ENCODE measurements at regions of chr6 and their contacts with region 1.

Region 1: DNA sequence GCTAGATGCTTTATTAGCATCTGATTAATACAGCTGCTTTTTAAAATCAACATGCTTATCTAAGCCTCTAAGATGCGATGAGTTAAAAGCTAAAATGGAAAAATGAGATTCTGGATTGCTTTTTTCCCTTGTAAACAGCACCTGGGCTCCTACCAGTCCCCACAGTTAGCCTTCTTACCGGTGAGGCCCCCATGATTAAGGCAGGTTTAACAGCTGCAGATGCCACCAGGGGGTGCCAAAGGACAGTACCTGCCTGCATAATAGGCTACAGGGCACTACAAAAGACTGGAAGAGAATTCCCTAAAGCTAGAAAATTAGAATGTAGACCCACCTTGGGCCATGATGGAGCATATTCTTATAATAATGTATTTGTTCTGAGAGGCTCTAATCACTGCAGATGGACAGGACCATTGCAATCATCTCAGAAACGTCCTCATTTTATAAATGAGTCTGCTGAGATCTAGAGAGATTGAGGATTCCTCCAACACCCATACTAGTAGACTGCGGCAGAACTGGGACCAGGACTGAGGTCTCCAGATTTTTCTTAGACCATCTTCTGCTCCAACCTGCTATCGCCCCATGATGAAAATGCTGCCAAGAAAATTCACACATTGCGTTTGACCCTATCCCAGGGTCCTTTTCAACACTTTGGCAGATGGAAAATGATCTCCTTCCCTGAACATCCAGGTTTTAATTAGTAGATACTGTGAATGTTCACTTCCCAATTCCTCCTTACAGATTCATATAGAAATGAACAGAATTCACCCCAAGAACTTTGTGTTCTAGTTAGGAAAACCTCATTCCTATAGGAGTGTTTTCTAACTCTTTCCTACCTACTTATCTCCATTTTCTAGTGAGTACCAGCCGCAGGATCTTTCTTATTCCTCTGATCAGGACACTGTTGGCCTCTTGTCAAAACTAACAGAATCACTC is 148.8 kb downstream of the RPS12 start:
- DNase-seq: peak; percentile 80
- ATAC-seq: 0 out of 2 replicates have a peak, but pooled peaks have one; percentile 19
- H3K4me3 ChIP-seq: no peak overlapping the region
- H3K27ac ChIP-seq: peak overlapping the region; percentile 79
- H3K4me1 ChIP-seq: peaks cover 72% of the 10 kb centered on the region
- H3K27me3 ChIP-seq: no peaks in the 10 kb centered on the region
- CTCF ChIP-seq: peak; percentile 92

Region 2: DNA sequence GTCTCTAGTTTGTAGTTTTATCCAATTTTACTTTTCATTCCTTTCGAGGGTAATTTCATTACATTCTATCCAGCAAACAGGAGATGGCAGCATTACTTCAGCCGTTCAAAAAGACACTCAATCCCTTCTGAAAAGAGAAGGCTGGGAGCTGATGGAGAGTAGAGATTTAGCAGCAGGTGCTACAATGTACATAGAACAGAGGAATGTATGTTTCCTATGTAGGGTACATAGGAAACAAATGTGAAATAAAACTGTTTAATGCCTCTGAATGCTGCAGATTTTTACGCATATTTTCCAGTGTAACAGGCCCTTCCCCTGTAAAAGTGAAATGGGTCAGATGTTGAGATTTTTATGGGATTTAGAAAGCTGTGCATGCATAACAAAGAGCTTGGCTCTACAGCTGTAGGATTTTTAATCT is 132.9 kb before region 1 on chr6:
- CTCF ChIA-PET with region 1: interaction called, 12 read pairs
- POLR2A ChIA-PET with region 1: interaction called, 6 read pairs
- intact Hi-C with region 1: loop called (anchors 1 kb)
- DNase-seq: peak; percentile 60
- ATAC-seq: peak; percentile 61; the same call in 1 of the 2 replicates
- H3K4me3 ChIP-seq: no peak overlapping the region
- H3K27ac ChIP-seq: no peak overlapping the region
- H3K4me1 ChIP-seq: no peaks in the 10 kb centered on the region
- H3K27me3 ChIP-seq: no peaks in the 10 kb centered on the region
- CTCF ChIP-seq: peak; percentile 73

Region 3: GRCh38 chr6:133040094-133040802 is 77.0 kb after region 1 on chr6:
- CTCF ChIA-PET with region 1: no interaction called
- POLR2A ChIA-PET with region 1: no interaction called
- intact Hi-C with region 1: loop called (anchors 1 kb)
- DNase-seq: peak; percentile 55
- ATAC-seq: peak; percentile 53
- H3K4me3 ChIP-seq: no peak overlapping the region
- H3K27ac ChIP-seq: no peak overlapping the region
- H3K4me1 ChIP-seq: no peaks in the 10 kb centered on the region
- H3K27me3 ChIP-seq: no peaks in the 10 kb centered on the region
- CTCF ChIP-seq: peak; percentile 72

Region 4: DNA sequence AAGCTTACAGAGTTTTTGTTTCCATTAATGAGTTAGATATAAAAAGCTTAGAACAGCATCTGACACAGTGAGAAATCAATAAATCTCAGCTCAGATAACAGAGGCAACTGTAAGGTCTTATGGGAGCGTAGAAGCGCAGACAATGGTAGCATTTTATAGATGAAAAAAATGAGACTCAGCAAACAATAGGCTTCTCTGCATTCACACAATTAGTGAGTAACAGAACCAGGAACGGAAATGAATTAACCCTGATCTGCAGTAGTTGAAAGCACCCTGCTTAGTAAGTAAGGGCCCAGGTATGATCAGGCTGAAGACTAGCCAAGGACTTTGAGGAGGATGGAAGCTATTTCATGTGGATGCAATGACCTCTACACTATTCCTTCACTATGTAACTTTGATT is 130.8 kb after region 1 on chr6:
- CTCF ChIA-PET with region 1: no interaction called
- POLR2A ChIA-PET with region 1: no interaction called
- intact Hi-C with region 1: no loop called
- DNase-seq: peak; percentile 48
- ATAC-seq: peak; percentile 81
- H3K4me3 ChIP-seq: no peak overlapping the region
- H3K27ac ChIP-seq: no peak overlapping the region
- H3K4me1 ChIP-seq: peaks cover 9% of the 10 kb centered on the region
- H3K27me3 ChIP-seq: no peaks in the 10 kb centered on the region
- CTCF ChIP-seq: no peak

Region 5: DNA sequence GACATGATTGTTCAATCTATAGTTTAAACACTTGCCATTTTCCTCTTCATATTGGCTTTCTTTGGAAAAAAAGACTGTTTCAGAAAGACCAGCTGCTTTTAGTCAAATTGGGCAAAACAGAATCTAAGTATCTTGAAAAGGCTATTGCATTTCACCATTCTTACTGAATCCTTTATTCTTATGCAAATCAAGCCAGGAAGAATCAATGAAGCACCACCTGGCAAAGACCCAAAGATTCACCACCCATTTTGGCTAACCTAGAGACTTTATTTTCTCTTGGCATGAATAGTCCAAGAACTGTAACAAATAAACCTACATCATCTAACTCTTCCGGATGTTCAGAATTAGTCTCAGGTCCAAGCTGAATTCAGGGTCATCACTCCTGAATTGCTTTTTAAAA is 206.7 kb after region 1 on chr6:
- CTCF ChIA-PET with region 1: no interaction called
- POLR2A ChIA-PET with region 1: no interaction called
- intact Hi-C with region 1: loop called (anchors 5 kb)
- DNase-seq: no peak
- ATAC-seq: no peak
- H3K4me3 ChIP-seq: no peak overlapping the region
- H3K27ac ChIP-seq: no peak overlapping the region
- H3K4me1 ChIP-seq: peaks cover 15% of the 10 kb centered on the region
- H3K27me3 ChIP-seq: no peaks in the 10 kb centered on the region
- CTCF ChIP-seq: no peak

Region 6: GRCh38 chr6:133248241-133249001 is 285.2 kb after region 1 on chr6:
- CTCF ChIA-PET with region 1: no interaction called
- POLR2A ChIA-PET with region 1: no interaction called
- intact Hi-C with region 1: loop called (anchors 5 kb)
- DNase-seq: peak; percentile 88
- ATAC-seq: peak; percentile 57
- H3K4me3 ChIP-seq: 0 out of 2 replicates have a peak overlapping the region, but pooled peaks have one; percentile 25
- H3K27ac ChIP-seq: peak overlapping the region; percentile 96
- H3K4me1 ChIP-seq: peaks cover 58% of the 10 kb centered on the region
- H3K27me3 ChIP-seq: no peaks in the 10 kb centered on the region
- CTCF ChIP-seq: no peak

Region 7: DNA sequence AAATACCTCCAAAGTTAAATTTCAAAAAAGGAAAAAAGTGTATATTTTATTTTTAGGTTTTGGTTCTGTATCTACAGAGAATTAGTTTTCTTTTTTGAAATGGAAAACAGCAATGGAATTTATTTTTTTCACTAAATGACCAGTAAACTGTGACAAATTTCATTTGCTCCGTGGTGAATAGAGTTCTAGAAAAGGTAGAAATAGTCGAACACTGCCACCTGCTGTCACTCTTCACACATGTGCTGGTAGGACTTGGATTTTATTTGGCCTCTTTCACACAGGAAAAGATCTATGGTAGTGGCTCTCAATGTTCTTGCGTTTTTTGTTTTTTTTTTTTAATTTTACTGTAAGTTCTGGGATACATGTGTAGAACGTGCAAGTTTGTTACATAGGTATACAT is 590.5 kb after region 1 on chr6:
- CTCF ChIA-PET with region 1: no interaction called
- POLR2A ChIA-PET with region 1: no interaction called
- intact Hi-C with region 1: loop called (anchors 2 kb)
- DNase-seq: peak; percentile 66
- ATAC-seq: peak; percentile 64
- H3K4me3 ChIP-seq: no peak overlapping the region
- H3K27ac ChIP-seq: no peak overlapping the region
- H3K4me1 ChIP-seq: peaks cover 11% of the 10 kb centered on the region
- H3K27me3 ChIP-seq: no peaks in the 10 kb centered on the region
- CTCF ChIP-seq: peak; percentile 66